HCT116 (cell line): ENCODE measurements at regions of chr11 and their contacts with region 1.

Region 1: GRCh38 chr11:34585735-34586487 is 35.0 kb upstream of the EHF start:
- DNase-seq: peak; percentile 56
- ATAC-seq: peak; percentile 80
- H3K4me3 ChIP-seq: no peak overlapping the region
- H3K27ac ChIP-seq: 0 out of 2 replicates have a peak overlapping the region, but pooled peaks have one; percentile 2
- H3K4me1 ChIP-seq: peaks cover 7 to 41% of the 10 kb centered on the region in 2 experiments; a peak in 3 of 4 replicates
- H3K27me3 ChIP-seq: no peaks in the 10 kb centered on the region
- CTCF ChIP-seq: peak; percentile 49 to 94 (median 80)
- POLR2A ChIP-seq: no peak
- RAD21 ChIP-seq: peak; percentile 97

Region 2: GRCh38 chr11:34512840-34513681 is 72.8 kb before region 1 on chr11:
- CTCF ChIA-PET with region 1: interaction called, 10 read pairs
- POLR2A ChIA-PET with region 1: no interaction called
- RAD21 ChIA-PET with region 1: no interaction called
- intact Hi-C with region 1: no loop called
- DNase-seq: peak; percentile 62
- ATAC-seq: peak; percentile 99
- H3K4me3 ChIP-seq: no peak overlapping the region
- H3K27ac ChIP-seq: no peak overlapping the region
- H3K4me1 ChIP-seq: peaks cover 2 to 22% of the 10 kb centered on the region in 2 experiments; a peak in 2 of 4 replicates
- H3K27me3 ChIP-seq: no peaks in the 10 kb centered on the region
- CTCF ChIP-seq: peak; percentile 66 to 97 (median 91)
- POLR2A ChIP-seq: no peak
- RAD21 ChIP-seq: peak; percentile 69

Region 3: GRCh38 chr11:34653826-34654490 is 68.0 kb after region 1 on chr11:
- CTCF ChIA-PET with region 1: interaction called, 10 read pairs
- POLR2A ChIA-PET with region 1: interaction called, 9 read pairs
- RAD21 ChIA-PET with region 1: interaction called in 1 of 2 experiments, 10 read pairs
- intact Hi-C with region 1: loop called (anchors 1 kb)
- DNase-seq: peak; percentile 93
- ATAC-seq: peak; percentile 92
- H3K4me3 ChIP-seq: peak overlapping the region in 1 of 2 experiments; percentile 12; a peak in 1 of 4 replicates
- H3K27ac ChIP-seq: peak overlapping the region; percentile 50
- H3K4me1 ChIP-seq: peaks cover 35 to 75% of the 10 kb centered on the region in 2 experiments
- H3K27me3 ChIP-seq: no peaks in the 10 kb centered on the region
- CTCF ChIP-seq: peak in 1 of 3 experiments; percentile 8; a peak in 2 of 6 replicates
- POLR2A ChIP-seq: no peak
- RAD21 ChIP-seq: peak; percentile 75

Region 4: DNA sequence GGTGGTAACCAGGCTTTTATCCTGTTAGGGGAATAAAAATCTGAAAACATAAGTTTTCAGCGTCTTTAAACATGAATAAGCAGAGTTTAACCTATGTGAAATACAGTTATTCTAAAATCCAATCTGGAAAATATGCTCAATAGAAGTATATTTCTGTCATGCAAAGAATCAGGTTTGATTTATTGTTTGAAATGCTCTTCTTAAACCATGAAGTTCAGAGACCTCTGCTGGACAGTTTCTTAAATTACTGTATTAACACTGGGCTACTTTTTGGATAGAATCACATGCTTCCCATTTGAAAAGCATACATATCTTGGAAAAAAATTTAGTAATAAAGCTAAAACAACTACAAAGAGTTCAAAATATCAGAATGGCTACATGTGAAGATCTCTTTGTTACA is 304.9 kb after region 1 on chr11:
- CTCF ChIA-PET with region 1: interaction called, 41 read pairs
- POLR2A ChIA-PET with region 1: no interaction called
- RAD21 ChIA-PET with region 1: interaction called, 6 to 7 read pairs
- intact Hi-C with region 1: loop called (anchors 1 kb)
- DNase-seq: peak; percentile 56
- ATAC-seq: 0 out of 2 replicates have a peak, but pooled peaks have one; percentile 46
- H3K4me3 ChIP-seq: no peak overlapping the region
- H3K27ac ChIP-seq: no peak overlapping the region
- H3K4me1 ChIP-seq: peaks cover 5 to 10% of the 10 kb centered on the region in 2 experiments; a peak in 2 of 4 replicates
- H3K27me3 ChIP-seq: no peaks in the 10 kb centered on the region
- CTCF ChIP-seq: peak; percentile 40 to 83 (median 67)
- POLR2A ChIP-seq: no peak
- RAD21 ChIP-seq: peak; percentile 90

Region 5: DNA sequence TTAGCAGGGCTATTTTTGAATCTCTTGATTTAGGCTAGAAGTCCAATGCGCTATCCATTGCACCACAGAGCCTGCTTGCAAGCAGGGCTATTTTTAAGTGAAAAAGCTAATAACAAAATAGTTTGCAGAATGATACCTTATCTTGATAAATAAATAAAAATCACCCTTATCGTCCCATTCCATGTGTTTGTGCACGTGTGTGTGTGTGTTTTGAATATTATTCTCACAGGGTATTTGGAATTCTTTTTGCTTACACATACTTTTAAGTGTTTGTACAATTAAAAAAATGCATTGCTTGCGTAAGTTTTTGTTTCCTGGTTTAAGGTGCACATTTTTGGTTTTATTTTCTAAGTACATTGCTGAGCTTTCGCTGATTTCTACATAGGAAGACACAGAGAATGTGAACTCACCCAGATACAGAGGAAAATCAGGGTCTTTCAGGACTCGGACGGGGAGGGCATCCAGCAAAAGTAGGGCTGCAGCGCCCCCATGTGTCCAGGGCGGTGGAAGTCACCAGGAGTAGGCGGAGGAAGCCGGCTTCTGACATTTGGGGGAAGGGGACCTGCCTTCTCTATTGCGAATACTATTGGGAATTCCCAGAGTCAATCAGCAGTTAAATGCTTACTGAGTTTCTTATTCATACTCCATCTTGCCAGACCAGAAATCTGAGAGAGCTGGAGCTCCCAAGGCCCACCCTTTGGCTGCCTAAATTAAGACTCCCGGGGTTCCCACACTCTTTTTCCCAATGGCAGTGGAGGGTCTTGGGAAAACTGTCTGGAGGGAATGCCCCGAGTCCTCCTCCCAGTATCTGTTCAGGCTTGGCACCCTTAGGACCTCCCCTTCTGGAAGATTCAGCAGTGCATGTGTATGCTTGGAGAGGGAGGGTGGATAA is 806.3 kb after region 1 on chr11:
- CTCF ChIA-PET with region 1: no interaction called
- POLR2A ChIA-PET with region 1: no interaction called
- RAD21 ChIA-PET with region 1: no interaction called
- intact Hi-C with region 1: loop called (anchors 5 kb)
- DNase-seq: peak; percentile 49
- ATAC-seq: peak; percentile 92
- H3K4me3 ChIP-seq: no peak overlapping the region
- H3K27ac ChIP-seq: no peak overlapping the region
- H3K4me1 ChIP-seq: peaks cover 15 to 18% of the 10 kb centered on the region in 2 experiments
- H3K27me3 ChIP-seq: no peaks in the 10 kb centered on the region
- CTCF ChIP-seq: peak; percentile 83 to 98 (median 84)
- POLR2A ChIP-seq: no peak
- RAD21 ChIP-seq: peak; percentile 98